Activated T-helper 2 cell treated with anti-CD3 and anti-CD28 coated beads, Interferon-gamma antibody, Interleukin-2, Interleukin-4, amounts not matched to agents 10 μg/mL and 5 μg/mL and 100 μg/mL, durations not matched to agents 14 hours and 24 hours and 36 hours (primary cell): ENCODE measurements at regions of chr2 and their contacts with region 1.

Region 1: GRCh38 chr2:136378712-136379595 is 261.0 kb upstream of the CXCR4 start:
- DNase-seq: peak; percentile 66
- H3K4me3 Mint-ChIP-seq: no peak overlapping the region
- H3K27ac Mint-ChIP-seq: no peak overlapping the region
- H3K4me1 Mint-ChIP-seq: peaks cover 82% of the 10 kb centered on the region
- H3K27me3 Mint-ChIP-seq: no peaks in the 10 kb centered on the region

Region 2: GRCh38 chr2:135629520-135629919 is 749.4 kb before region 1 on chr2:
- intact Hi-C with region 1: no loop called
- DNase-seq: no peak
- H3K4me3 Mint-ChIP-seq: no peak overlapping the region
- H3K27ac Mint-ChIP-seq: no peak overlapping the region
- H3K4me1 Mint-ChIP-seq: no peaks in the 10 kb centered on the region
- H3K27me3 Mint-ChIP-seq: no peaks in the 10 kb centered on the region

Region 3: DNA sequence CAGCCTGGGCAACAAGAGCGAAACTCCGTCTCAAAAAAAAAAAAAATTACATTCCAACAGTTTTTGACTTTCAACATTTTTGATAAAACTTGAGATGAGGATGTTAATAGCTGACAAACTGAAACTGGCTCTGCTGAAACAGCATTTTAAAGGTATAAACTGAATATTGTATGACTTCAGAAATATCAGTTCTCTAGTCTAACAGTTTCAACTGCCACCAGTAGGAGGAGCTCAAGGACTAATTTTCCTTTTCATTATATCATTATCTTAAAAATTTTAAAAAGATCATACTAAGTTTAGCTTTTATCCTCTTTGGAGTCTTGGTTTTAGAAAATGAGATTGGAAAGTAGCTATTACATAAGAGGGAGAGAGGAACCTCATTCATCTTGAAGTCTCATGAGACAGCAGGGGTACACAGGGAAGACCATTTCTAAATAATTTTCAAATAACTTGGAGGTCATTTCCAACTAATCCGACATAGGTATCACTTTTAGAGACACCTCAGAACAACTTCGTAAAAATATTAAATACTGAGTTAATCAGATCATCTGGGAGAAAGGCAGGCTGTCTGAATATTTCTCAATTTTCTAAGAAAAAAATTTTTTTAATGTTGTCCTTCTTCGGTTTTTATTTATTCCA is 465.1 kb before region 1 on chr2:
- intact Hi-C with region 1: loop called (anchors 1 kb)
- DNase-seq: no peak
- H3K4me3 Mint-ChIP-seq: no peak overlapping the region
- H3K27ac Mint-ChIP-seq: peak overlapping the region; percentile 76
- H3K4me1 Mint-ChIP-seq: peaks cover 14% of the 10 kb centered on the region
- H3K27me3 Mint-ChIP-seq: no peaks in the 10 kb centered on the region

Region 4: DNA sequence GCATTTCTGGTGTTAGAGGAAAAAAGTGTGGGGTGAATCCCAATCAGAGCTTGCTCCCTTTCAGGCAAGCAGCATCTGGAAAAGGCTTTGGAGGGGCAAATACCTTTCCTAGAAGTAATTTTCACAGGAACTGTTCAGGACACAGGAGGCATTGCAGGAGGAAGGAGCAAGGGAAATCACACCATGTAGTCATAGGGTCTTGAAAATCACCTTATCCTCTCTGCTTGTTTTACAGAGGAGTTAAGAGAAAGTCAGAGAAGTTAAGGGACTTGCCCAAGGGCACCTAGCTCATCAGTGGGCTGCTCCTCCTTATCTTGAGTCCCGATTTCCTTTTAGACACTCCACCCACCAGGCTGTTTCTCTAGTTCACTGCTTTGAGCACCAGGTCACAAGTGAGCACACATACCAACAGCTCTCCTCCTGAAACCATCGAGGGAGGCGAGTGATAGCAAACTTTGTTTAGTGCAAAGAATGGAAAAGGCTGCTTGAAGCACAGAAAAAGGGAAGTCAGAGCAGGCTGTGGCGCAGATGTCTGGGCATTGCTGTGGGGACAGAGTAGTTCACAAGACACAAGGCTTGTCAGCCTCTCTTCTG is 171.8 kb before region 1 on chr2:
- intact Hi-C with region 1: loop called (anchors 1 kb)
- DNase-seq: no peak
- H3K4me3 Mint-ChIP-seq: peak overlapping the region; percentile 28
- H3K27ac Mint-ChIP-seq: peak overlapping the region; percentile 85
- H3K4me1 Mint-ChIP-seq: peaks cover 38% of the 10 kb centered on the region
- H3K27me3 Mint-ChIP-seq: no peaks in the 10 kb centered on the region

Region 5: GRCh38 chr2:136362676-136363390 is 16.1 kb before region 1 on chr2:
- intact Hi-C with region 1: loop called (anchors 1 kb)
- DNase-seq: no peak
- H3K4me3 Mint-ChIP-seq: peak overlapping the region; percentile 2
- H3K27ac Mint-ChIP-seq: peak overlapping the region; percentile 35
- H3K4me1 Mint-ChIP-seq: peaks cover 49% of the 10 kb centered on the region
- H3K27me3 Mint-ChIP-seq: peaks cover 1% of the 10 kb centered on the region